Gastrocnemius medialis (tissue), 4 donors: ENCODE measurements at regions of chr12 and their contacts with region 1.

Region 1: DNA sequence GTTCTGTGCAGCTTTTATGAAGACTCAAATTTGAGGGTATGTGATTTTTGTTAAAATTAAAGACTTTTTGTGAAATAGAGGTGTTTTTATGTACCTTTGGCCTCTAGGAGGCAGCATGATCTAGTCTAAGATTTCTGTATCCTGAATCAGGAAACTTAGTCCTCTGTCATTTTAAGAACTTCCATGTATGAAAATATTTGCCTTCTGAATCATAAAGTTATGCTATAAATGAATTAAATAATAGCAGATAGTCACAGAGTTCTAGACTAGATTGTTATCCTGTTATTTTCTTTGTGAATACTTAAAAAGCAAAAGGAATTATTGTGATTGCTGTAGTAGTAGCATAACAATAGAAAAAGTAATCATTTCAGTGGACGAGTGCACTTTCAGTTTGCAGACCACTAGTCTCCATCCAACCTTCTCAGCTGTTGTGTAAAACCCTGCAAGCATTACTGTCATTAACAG is 56.3 kb downstream of the FGD4 start:
- DNase-seq: no peak
- ATAC-seq: peak; percentile 75 to 77
- H3K4me3 ChIP-seq: peak overlapping the region; percentile 36 to 55 (median 42)
- H3K27ac ChIP-seq: peak overlapping the region; percentile 45 to 72 (median 62)
- H3K4me1 ChIP-seq: peaks cover 25 to 45% of the 10 kb centered on the region in 2 donors
- H3K27me3 ChIP-seq: no peaks in the 10 kb centered on the region
- CTCF ChIP-seq: peak; percentile 51 to 89 (median 69)
- POLR2A ChIP-seq: no peak

Region 2: DNA sequence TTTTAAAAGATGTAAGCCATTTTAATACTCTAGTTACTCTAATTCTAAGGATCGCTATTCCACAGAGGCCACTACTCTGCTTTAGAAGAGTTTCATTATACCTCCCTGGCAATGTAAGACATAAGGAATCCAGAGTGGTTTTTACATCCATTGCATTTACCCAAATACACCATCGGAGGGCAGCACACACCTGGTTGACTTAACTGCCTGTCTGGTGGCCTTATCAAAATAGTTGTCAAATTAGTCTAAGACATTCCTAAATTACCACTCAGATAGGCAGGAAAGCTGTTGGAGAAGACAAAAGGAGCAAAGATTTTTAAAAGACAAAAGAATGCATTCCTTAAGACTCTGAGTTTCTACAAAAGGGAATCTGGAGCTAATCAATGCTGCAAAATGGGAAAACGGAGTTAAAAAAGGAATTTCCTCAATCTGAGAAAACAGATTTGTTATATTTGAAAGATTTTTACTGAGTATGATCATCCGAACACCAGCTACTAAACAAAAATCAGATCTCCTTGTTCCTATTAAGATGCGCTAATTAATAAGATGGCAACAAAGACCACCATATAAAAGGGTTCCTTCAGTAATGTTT is 90.1 kb before region 1 on chr12:
- in situ Hi-C with region 1: loop called in 2 of 4 experiments (anchors 5 to 10 kb)
- intact Hi-C with region 1: loop called (anchors 10 kb)
- DNase-seq: peak; percentile 4 to 23
- ATAC-seq: peak in 1 of 2 donors; percentile 68
- H3K4me3 ChIP-seq: no peak overlapping the region
- H3K27ac ChIP-seq: no peak overlapping the region
- H3K4me1 ChIP-seq: no peaks in the 10 kb centered on the region
- H3K27me3 ChIP-seq: no peaks in the 10 kb centered on the region
- CTCF ChIP-seq: peak; percentile 50 to 86 (median 71)
- POLR2A ChIP-seq: no peak

Region 3: GRCh38 chr12:32423559-32423958 is 32.1 kb before region 1 on chr12:
- in situ Hi-C with region 1: no loop called
- intact Hi-C with region 1: no loop called
- DNase-seq: no peak
- ATAC-seq: no peak
- H3K4me3 ChIP-seq: no peak overlapping the region
- H3K27ac ChIP-seq: peak overlapping the region in 3 of 4 donors; percentile 14 to 35 (median 18)
- H3K4me1 ChIP-seq: peaks cover 9 to 17% of the 10 kb centered on the region in 2 donors
- H3K27me3 ChIP-seq: no peaks in the 10 kb centered on the region
- CTCF ChIP-seq: no peak
- POLR2A ChIP-seq: no peak

Region 4: DNA sequence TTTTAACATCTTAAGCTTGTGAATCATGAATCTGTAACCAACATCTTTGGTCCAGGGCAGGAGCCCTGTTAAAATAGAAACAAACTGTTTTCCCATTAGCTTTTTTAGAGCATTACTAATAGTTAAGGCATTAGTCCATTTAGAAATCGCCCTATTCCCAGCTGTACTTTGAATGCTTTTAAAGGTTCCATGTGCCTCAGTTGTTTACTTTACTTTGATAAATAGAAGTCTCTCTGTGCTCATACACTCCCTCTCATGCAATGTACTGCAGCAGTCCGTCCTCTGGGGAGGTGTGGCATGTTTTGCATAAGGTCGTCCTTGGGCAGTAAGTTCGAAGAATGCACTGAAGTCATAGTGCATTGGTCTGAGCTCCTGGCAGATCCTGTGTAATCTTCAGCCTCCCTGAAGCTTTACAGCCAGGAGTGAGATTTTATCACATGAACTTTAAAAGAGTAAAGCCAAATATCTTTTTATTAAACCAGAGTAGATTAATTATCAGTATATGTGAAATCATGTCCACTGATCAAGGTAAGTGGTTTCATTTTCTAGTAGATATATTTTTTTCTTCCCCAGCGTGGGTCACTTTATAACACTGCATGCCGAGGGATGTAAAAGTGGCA is 78.4 kb after region 1 on chr12:
- in situ Hi-C with region 1: no loop called
- intact Hi-C with region 1: loop called (anchors 1 kb)
- DNase-seq: peak; percentile 79 to 85
- ATAC-seq: peak; percentile 88 to 91
- H3K4me3 ChIP-seq: peak overlapping the region; percentile 49 to 62 (median 58)
- H3K27ac ChIP-seq: peak overlapping the region; percentile 71 to 92 (median 80)
- H3K4me1 ChIP-seq: peaks cover 56 to 72% of the 10 kb centered on the region in 2 donors
- H3K27me3 ChIP-seq: no peaks in the 10 kb centered on the region
- CTCF ChIP-seq: no peak
- POLR2A ChIP-seq: peak; percentile 64 to 74

Region 5: DNA sequence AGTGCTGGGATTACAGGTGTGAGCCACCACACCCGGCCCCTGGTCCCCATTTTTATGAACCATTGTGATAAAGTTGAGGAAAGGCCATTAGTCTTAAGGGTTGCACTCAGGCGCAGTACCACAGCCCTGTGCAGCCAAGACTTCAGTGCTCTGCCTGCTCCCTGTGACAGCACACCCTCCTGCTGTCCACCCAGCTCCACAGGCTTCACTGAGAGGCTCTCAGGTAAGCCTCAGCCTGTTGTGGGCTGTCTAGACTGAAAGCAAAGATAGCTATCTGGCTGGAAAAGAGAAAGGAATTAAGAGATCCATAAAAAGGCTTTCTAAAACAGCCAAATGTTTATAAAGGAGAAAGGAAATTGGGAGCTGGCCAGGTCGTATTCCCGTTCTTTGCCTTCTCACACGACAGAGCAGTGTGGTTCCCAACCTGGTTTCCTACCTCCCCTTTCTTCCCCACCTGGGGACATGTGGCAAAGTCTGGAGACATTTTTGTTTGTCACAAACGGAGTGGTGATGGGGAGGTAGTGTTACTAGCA is 204.3 kb after region 1 on chr12:
- in situ Hi-C with region 1: loop called in 1 of 4 experiments (anchors 5 kb)
- intact Hi-C with region 1: loop called (anchors 1 kb)
- DNase-seq: no peak
- ATAC-seq: peak in 1 of 2 donors; percentile 7
- H3K4me3 ChIP-seq: peak overlapping the region in 1 of 4 donors; percentile 9
- H3K27ac ChIP-seq: peak overlapping the region; percentile 81 to 93 (median 87)
- H3K4me1 ChIP-seq: peaks cover 19 to 23% of the 10 kb centered on the region in 2 donors
- H3K27me3 ChIP-seq: no peaks in the 10 kb centered on the region
- CTCF ChIP-seq: no peak
- POLR2A ChIP-seq: no peak

Region 6: DNA sequence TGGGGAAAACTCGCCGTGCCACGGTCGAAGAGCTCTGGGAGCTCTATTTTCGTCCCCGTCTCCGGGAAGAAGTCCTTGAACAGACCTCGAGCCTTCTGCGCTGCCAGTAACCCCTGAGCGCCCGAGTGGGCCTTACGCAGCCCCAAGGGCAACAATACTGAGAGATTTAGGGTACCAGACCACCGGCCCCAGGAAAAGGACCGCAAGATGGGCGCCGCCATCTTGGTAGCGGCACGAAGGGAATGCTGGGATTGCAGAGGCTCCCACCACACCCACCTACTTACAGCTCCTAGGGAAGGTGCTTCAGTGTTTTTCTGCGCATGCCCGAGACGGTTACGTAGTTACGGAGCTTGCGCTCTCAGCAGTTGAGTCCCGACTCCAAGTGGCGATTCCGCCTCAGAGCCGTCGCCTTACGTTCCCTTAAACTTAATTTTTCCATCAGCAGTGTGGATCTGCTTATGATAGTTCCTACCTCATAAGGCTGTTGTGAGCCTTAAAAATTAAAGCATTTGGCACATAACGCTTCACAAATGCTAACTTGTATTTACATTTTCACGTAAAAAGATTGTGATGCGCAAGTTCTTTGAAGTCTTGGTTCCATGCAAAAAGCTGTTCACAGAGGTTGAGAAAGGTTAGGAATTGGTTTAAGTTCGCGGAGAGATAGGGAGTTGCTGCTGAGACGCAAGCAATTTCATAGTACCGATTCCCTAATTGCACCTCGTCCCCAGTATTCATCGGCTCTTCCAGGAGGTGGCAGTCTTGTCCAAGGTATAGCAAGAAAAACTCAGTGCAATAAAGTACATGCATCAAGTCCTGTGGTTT is 300.2 kb after region 1 on chr12 and contains the start of gene YARS2:
- in situ Hi-C with region 1: no loop called
- intact Hi-C with region 1: loop called (anchors 2 kb)
- DNase-seq: peak; percentile 95 to 96
- ATAC-seq: peak; percentile 99 to 100
- H3K4me3 ChIP-seq: peak within 1 kb of the TSS; percentile 80 to 100 (median 96)
- H3K27ac ChIP-seq: peak within 1 kb of the TSS; percentile 81 to 88 (median 84)
- H3K4me1 ChIP-seq: peaks cover 12 to 15% of the 10 kb centered on the region in 2 donors
- H3K27me3 ChIP-seq: no peaks in the 10 kb centered on the region
- CTCF ChIP-seq: peak; percentile 74 to 92 (median 79)
- POLR2A ChIP-seq: peak in 1 of 2 donors; percentile 35
- total RNA-seq, gene YARS2: 9.1 to 19.4 (median 13.9) TPM

Region 7: DNA sequence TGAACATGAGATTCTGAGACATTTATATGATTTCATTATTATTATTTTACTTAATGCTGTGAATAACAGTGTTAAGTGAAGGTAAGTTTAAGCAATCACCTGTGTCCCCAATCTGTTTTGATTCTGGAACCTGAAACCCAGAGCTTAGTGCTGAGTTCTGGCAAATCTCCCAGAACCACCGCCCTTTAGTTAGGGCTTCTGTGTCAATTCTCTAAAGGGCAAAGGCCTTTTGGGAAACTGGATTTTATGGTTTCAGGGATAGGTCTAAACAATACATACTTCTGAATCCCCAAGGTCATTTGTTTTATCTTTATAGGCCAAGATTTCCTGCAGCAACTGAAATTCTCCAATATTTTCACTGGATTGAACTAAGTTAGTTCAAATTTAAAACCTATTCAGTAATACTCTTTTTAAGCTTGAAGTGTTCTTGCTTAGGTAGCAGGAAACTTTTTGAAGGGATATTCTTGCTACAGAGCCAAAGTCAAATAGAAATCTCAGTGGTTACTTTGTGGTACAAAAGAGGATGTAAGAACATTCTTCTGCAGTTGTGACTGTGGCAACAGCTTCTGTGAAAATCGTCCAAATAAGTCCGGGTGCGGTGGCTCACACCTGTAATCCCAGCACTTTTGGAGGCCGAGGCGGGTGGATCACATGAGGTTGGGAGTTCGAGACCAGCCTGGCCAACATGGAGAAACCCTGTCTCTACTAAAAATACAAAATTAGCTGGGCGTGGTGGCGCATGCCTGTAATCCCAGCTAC is 450.9 kb after region 1 on chr12:
- in situ Hi-C with region 1: no loop called
- intact Hi-C with region 1: no loop called
- DNase-seq: no peak
- ATAC-seq: no peak
- H3K4me3 ChIP-seq: no peak overlapping the region
- H3K27ac ChIP-seq: no peak overlapping the region
- H3K4me1 ChIP-seq: no peaks in the 10 kb centered on the region
- H3K27me3 ChIP-seq: no peaks in the 10 kb centered on the region
- CTCF ChIP-seq: no peak
- POLR2A ChIP-seq: no peak